ENCODE measurements at regions of chr3 and their contacts with region 1.

Region 1: GRCh38 chr3:107064445-107065060 is 312.7 kb upstream of the CCDC54 start:
- DNase-seq: peak; percentile 43
- H3K4me3 ChIP-seq: no peak overlapping the region
- H3K27ac ChIP-seq: no peak overlapping the region
- H3K27me3 ChIP-seq: no peaks in the 10 kb centered on the region
- CTCF ChIP-seq: peak; percentile 91

Region 2: GRCh38 chr3:106609666-106610301 is 454.8 kb before region 1 on chr3:
- CTCF ChIA-PET with region 1: interaction called, 30 read pairs
- POLR2A ChIA-PET with region 1: no interaction called
- DNase-seq: peak; percentile 87
- H3K4me3 ChIP-seq: no peak overlapping the region
- H3K27ac ChIP-seq: no peak overlapping the region
- H3K27me3 ChIP-seq: no peaks in the 10 kb centered on the region
- CTCF ChIP-seq: peak; percentile 93

Region 3: DNA sequence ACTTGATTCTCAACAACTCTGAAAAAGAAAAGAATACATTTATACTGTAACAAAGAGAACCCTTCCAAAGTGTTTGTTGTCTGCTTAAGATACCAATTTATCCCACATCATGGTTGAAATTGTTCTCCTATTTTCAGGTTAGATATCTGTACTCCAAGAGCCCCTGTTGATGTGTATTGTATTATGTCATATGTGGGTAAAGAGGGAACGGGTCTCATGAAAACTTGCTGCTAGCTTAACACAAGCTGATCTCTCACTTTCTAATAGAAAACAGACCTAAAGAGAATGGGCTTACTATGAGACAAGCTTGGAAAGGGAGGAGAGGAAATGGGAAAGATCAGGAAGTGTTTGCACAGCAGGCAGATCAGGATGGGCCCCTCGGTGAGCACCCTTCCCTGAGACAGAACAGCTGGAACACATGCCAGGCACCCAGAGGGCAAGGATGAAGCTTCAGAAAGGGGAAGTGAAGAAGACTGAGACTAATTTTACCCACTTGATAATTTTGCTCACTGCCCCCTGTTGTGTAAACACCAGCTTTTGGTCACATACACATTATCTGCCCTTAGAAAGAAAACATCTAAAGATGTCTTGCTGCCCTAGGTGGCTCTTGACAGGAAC is 435.2 kb before region 1 on chr3:
- CTCF ChIA-PET with region 1: interaction called, 10 read pairs
- POLR2A ChIA-PET with region 1: no interaction called
- DNase-seq: no peak
- H3K4me3 ChIP-seq: no peak overlapping the region
- H3K27ac ChIP-seq: no peak overlapping the region
- H3K27me3 ChIP-seq: no peaks in the 10 kb centered on the region
- CTCF ChIP-seq: no peak

Region 4: DNA sequence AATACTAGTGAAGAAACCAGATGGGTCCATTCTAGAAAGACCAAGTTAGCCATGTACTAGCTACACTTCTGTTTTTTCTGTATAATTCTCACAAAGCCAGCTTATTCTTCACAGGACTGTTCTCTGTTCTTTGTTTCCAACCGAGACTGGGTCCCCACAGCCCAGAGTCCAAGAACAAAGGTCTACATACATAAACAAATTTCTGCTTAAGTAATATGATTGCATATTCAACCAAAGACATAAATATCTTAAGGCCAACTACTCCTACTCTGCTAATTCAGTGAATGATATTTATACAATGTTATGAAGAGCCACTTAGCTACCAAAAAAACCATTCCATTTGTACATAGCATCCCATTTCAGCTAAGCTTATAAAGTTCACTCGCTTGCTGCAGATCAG is 12.8 kb after region 1 on chr3:
- CTCF ChIA-PET with region 1: interaction called, 15 read pairs
- POLR2A ChIA-PET with region 1: no interaction called
- DNase-seq: no peak
- H3K4me3 ChIP-seq: no peak overlapping the region
- H3K27ac ChIP-seq: no peak overlapping the region
- H3K27me3 ChIP-seq: no peaks in the 10 kb centered on the region
- CTCF ChIP-seq: no peak

Region 5: GRCh38 chr3:107117922-107118536 is 53.5 kb after region 1 on chr3:
- CTCF ChIA-PET with region 1: interaction called, 11 read pairs
- POLR2A ChIA-PET with region 1: no interaction called
- DNase-seq: peak; percentile 43
- H3K4me3 ChIP-seq: no peak overlapping the region
- H3K27ac ChIP-seq: no peak overlapping the region
- H3K27me3 ChIP-seq: no peaks in the 10 kb centered on the region
- CTCF ChIP-seq: peak; percentile 64